GM12878 (cell line): ENCODE measurements at regions of chr11 and their contacts with region 1.

Region 1: DNA sequence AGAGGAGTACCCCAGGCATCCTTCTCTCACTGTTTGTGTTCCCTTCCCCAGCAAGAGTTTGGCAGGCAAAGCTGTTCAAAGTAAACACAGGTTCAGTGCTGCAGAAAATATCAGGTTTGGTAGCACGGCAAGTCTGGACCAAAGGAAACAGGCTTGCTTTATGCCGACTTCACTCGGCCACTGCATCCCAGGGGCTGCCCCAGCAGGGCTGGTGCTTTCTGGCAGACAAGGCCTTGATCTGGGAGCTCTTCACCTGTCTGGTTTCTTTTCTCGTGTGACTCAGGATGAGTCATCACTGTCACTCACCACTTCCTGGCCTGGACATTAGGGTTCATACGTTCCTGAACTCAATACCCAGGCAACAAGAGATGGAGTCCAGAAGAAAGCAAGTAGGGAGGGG is 52.6 kb upstream of the NAV2 start:
- DNase-seq: peak; percentile 61
- ATAC-seq: peak; percentile 99
- H3K4me3 ChIP-seq: no peak overlapping the region
- H3K27ac ChIP-seq: no peak overlapping the region
- H3K4me1 ChIP-seq: no peaks in the 10 kb centered on the region; the same call in 1 of the 2 replicates
- H3K27me3 ChIP-seq: no peaks in the 10 kb centered on the region
- CTCF ChIP-seq: no peak
- EP300 ChIP-seq: peak in 1 of 2 experiments; percentile 57; a peak in 1 of 4 replicates
- POLR2A ChIP-seq: no peak
- RAD21 ChIP-seq: no peak

Region 2: DNA sequence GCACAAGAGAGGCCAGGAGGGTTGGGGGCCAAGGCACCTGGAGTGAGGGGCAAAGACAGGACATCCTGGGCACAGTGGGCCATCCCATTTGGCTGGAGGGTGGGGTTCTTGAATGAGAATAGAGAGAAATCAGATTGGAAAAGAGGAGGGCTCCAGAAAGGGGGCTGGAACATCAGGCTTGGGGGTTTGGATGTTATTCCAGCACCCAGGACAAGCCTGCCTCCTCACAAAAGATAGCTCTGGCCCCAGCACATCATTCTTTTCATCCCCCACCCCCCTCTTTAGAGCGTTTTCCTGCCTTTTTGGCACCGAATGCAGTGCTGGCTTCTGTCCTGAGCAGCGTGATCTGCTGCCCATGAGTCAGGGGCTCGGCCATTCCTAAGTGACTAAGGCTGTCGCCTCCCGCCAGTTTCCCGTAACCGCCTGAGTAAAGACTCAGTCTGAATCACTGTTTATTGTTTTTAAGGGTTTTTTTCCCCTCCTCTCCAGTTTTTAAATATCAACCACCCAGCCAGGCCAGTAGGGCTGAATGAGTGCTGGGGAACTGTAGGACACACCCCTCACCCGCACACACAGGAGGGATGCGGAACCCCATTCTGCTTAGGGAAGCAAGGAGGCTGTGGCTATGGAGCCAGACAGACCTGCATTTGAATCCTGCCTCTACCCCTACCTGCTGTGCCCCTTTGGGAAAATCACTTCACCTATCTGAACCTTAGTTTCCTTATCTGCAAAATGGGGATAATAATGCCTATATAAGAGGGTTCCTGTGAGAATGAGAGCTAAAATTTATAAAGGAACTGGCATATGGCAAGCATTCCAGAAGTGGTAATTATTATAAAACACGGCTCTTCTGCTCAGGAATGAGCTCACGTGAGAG is 20.1 kb after region 1 on chr11:
- CTCF ChIA-PET with region 1: interaction called, 3 read pairs
- POLR2A ChIA-PET with region 1: no interaction called
- RAD21 ChIA-PET with region 1: no interaction called
- SMC1A ChIA-PET with region 1: no interaction called
- in situ Hi-C with region 1: no loop called
- intact Hi-C with region 1: loop called (anchors 2 kb)
- DNase-seq: no peak
- ATAC-seq: no peak
- H3K4me3 ChIP-seq: no peak overlapping the region
- H3K27ac ChIP-seq: no peak overlapping the region
- H3K4me1 ChIP-seq: no peaks in the 10 kb centered on the region
- H3K27me3 ChIP-seq: no peaks in the 10 kb centered on the region; a peak in 1 of 4 replicates
- CTCF ChIP-seq: no peak
- EP300 ChIP-seq: no peak
- POLR2A ChIP-seq: no peak
- RAD21 ChIP-seq: no peak